PC-3 (cell line): ENCODE measurements at regions of chr1 and their contacts with region 1.

Region 1: GRCh38 chr1:212089560-212090163 is 54.1 kb downstream of the DTL start:
- DNase-seq: no peak
- ATAC-seq: no peak
- H3K4me3 ChIP-seq: no peak overlapping the region
- H3K27ac ChIP-seq: no peak overlapping the region
- H3K4me1 ChIP-seq: peaks cover 18% of the 10 kb centered on the region
- H3K27me3 ChIP-seq: no peaks in the 10 kb centered on the region
- CTCF ChIP-seq: no peak

Region 2: GRCh38 chr1:212229654-212230053 is 140.0 kb after region 1 on chr1:
- CTCF ChIA-PET with region 1: interaction called, 3 read pairs
- POLR2A ChIA-PET with region 1: no interaction called
- intact Hi-C with region 1: loop called (anchors 5 kb)
- DNase-seq: peak; percentile 50
- ATAC-seq: peak; percentile 69
- H3K4me3 ChIP-seq: no peak overlapping the region
- H3K27ac ChIP-seq: no peak overlapping the region
- H3K4me1 ChIP-seq: peaks cover 5% of the 10 kb centered on the region
- H3K27me3 ChIP-seq: peaks cover 9% of the 10 kb centered on the region; the same call in 1 of the 2 replicates
- CTCF ChIP-seq: no peak

Region 3: GRCh38 chr1:212291505-212292134 is 202.0 kb after region 1 on chr1:
- CTCF ChIA-PET with region 1: no interaction called
- POLR2A ChIA-PET with region 1: no interaction called
- intact Hi-C with region 1: loop called (anchors 1 kb)
- DNase-seq: peak; percentile 84
- ATAC-seq: peak; percentile 52
- H3K4me3 ChIP-seq: no peak overlapping the region
- H3K27ac ChIP-seq: no peak overlapping the region
- H3K4me1 ChIP-seq: peaks cover 45% of the 10 kb centered on the region
- H3K27me3 ChIP-seq: no peaks in the 10 kb centered on the region
- CTCF ChIP-seq: peak; percentile 99